Naive thymus-derived CD8-positive, alpha-beta T cell (primary cell): ENCODE measurements at regions of chr17 and their contacts with region 1.

Region 1: DNA sequence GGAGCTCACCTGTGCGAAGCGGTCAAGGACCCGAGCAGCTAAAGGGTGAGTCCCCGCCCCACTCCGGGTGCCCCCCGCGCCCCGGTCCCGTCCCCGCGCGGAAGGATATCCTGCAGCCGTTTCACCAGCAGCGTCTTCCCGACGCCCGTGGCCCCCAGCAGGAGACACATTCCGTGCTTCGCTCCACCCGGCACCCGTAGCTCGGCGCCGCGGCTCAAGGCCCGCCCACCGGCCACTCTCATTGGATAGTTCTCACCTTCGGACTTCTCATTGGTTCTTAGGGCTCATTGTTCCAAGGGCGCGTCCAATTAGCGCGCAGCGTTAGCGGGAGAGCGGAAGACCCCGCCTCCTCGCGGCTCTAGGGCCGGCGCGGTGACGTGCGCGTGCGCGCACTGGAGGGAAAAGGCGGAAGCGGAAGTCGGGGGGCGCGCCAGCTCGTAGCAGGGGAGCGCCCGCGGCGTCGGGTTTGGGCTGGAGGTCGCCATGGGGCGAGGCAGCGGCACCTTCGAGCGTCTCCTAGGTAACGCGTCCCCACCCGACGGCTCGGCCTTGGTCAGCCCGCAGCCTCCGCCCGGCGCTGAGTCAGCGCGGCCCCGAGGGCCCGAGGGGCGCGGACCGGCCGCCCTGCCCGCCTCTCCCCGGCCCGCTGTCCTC is at the starts of genes ARL16 and HGS:
- DNase-seq: peak; percentile 96 to 99 (median 97)
- ATAC-seq: peak; percentile 98 to 99
- H3K4me3 Mint-ChIP-seq: peak within 1 kb of the TSS; percentile 87 to 100 (median 98)
- H3K27ac Mint-ChIP-seq: peak within 1 kb of the TSS; percentile 84 to 98 (median 94)
- H3K4me1 Mint-ChIP-seq: peaks cover 16 to 53% (median 31%) of the 10 kb centered on the region in 4 donors
- H3K27me3 Mint-ChIP-seq: no peaks in the 10 kb centered on the region
- polyA plus RNA-seq, gene ARL16: 26.0 to 39.3 (median 32.9) TPM
- polyA plus RNA-seq, gene HGS: 15.4 to 31.1 (median 21.7) TPM

Region 2: GRCh38 chr17:81666342-81667191 is 17.1 kb before region 1 on chr17 and contains the starts of genes CCDC137 and OXLD1:
- POLR2A ChIA-PET with region 1: interaction called, 80 read pairs
- DNase-seq: peak; percentile 86 to 95 (median 90)
- ATAC-seq: peak; percentile 84 to 92
- H3K4me3 Mint-ChIP-seq: peak within 1 kb of the TSS; percentile 82 to 98 (median 94)
- H3K27ac Mint-ChIP-seq: peak within 1 kb of the TSS; percentile 89 to 98 (median 96)
- H3K4me1 Mint-ChIP-seq: peaks cover 16 to 55% (median 39%) of the 10 kb centered on the region in 4 donors
- H3K27me3 Mint-ChIP-seq: peaks cover 0 to 1% (median 0%) of the 10 kb centered on the region in 5 donors
- polyA plus RNA-seq, gene CCDC137: 11.0 to 23.9 (median 11.1) TPM
- polyA plus RNA-seq, gene OXLD1: 67.6 to 110 (median 98.3) TPM

Region 3: DNA sequence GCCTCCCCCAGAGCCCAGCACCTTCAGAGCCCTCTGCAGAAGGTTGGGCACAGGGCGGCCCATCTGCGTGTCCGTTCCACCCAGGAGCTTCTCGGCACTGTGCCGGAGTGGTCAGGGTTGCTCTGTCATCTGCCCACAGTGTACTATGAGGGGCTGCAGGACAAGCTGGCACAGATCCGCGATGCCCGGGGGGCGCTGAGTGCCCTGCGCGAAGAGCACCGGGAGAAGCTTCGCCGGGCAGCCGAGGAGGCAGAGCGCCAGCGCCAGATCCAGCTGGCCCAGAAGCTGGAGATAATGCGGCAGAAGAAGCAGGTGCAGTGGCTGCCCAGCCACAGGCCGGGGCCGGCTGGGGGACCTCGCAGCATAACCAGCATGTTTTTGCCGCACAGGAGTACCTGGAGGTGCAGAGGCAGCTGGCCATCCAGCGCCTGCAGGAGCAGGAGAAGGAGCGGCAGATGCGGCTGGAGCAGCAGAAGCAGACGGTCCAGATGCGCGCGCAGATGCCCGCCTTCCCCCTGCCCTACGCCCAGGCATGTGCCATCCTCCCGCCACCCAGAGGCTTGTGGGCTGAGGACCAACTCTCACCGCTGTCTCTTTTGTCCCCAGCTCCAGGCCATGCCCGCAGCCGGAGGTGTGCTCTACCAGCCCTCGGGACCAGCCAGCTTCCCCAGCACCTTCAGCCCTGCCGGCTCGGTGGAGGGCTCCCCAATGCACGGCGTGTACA is 12.7 kb after region 1 on chr17:
- POLR2A ChIA-PET with region 1: interaction called, 75 read pairs
- DNase-seq: no peak
- ATAC-seq: no peak
- H3K4me3 Mint-ChIP-seq: no peak overlapping the region
- H3K27ac Mint-ChIP-seq: no peak overlapping the region
- H3K4me1 Mint-ChIP-seq: peaks cover 2 to 12% (median 8%) of the 10 kb centered on the region in 4 donors
- H3K27me3 Mint-ChIP-seq: no peaks in the 10 kb centered on the region

Region 4: GRCh38 chr17:81702971-81703746 is 19.4 kb after region 1 on chr17 and contains the start of gene MRPL12:
- POLR2A ChIA-PET with region 1: interaction called, 75 read pairs
- DNase-seq: peak; percentile 76 to 92 (median 84)
- ATAC-seq: peak; percentile 89 to 92
- H3K4me3 Mint-ChIP-seq: peak within 1 kb of the TSS; percentile 85 to 92 (median 90)
- H3K27ac Mint-ChIP-seq: peak within 1 kb of the TSS; percentile 78 to 97 (median 95)
- H3K4me1 Mint-ChIP-seq: peaks cover 7 to 44% (median 30%) of the 10 kb centered on the region in 4 donors
- H3K27me3 Mint-ChIP-seq: no peaks in the 10 kb centered on the region
- polyA plus RNA-seq, gene MRPL12: 48.0 to 60.2 (median 48.0) TPM

Region 5: DNA sequence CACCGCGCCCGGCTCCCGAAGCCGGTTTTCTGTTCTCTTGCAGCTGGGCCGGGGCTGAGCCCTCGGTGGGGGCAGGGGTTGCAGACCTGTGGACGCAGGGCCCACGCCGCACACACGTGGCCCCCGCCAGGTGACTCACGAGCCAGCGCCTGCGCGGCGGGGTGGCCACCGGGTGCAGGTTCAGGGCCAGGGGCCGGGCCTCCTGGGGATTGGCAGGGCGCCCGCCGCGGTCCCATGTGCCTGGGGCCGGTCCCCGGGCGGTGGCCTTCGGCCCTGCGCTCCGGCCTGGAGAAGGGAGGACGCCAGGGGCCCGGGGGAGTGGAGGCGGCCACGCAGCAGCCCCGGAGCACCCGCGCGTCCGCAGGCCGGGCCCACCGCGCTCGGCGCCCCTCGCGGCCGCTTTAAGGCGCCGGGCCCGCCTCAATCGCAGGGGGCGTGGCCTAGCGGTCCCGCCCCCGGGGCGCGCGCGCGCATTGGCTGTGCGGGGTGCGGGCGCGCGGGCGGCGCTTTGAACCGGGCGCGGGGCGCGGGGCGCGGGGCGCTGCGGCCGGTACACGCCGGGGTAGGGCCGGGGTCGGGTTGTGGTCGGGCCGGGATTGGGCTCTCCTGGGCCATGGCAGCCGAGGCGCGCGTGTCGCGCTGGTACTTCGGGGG is 28.2 kb after region 1 on chr17 and contains the start of gene SLC25A10:
- POLR2A ChIA-PET with region 1: interaction called, 29 read pairs
- DNase-seq: peak; percentile 53 to 87 (median 78)
- ATAC-seq: peak; percentile 83
- H3K4me3 Mint-ChIP-seq: peak within 1 kb of the TSS; percentile 73 to 90 (median 86)
- H3K27ac Mint-ChIP-seq: peak within 1 kb of the TSS in 9 of 10 donors; percentile 35 to 91 (median 80)
- H3K4me1 Mint-ChIP-seq: peaks cover 7 to 23% (median 19%) of the 10 kb centered on the region in 4 donors
- H3K27me3 Mint-ChIP-seq: no peaks in the 10 kb centered on the region
- polyA plus RNA-seq, gene SLC25A10: 2.3 to 4.4 (median 2.3) TPM